ENCODE measurements at regions of chr12 and their contacts with region 1.

Region 1: DNA sequence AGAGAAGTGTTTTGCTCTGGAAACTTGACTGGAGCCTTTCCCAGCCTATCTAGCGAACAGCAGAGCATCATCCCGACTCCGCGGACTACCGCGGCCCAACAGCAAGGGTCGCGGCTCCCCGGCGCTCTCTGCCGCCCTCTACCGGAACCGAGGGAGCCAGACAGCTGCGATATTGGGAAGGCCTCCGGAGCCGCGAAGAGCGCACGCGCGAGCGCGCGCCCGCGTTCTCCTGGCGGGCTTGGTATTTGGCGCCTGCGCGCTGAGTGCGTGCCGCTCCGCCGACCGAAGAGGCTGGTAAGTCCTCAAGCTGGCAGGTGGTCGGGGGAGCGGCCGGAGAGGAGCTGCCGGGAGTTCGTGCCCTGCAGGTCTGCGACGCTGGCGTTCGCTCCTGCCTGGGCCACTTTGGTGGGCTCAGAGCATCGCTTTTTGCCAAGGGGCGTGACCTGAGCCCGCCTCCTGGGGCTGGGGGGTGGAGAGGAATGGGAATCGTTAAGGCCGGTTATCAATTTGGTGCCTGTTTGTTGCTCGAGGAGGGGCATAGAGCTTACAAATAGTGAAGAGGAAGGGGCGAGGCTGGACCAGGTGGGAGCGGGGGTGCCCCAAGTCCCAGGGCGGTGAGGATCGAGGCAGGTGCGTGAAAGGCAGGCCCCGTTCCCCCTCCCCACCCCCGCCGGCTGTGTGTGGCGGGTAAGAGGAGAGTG is at the start of gene TMEM106C:
- DNase-seq: peak; percentile 89 to 93 (median 92)
- H3K4me3 ChIP-seq: peak within 1 kb of the TSS; percentile 84 to 92
- H3K4me3 Mint-ChIP-seq: peak within 1 kb of the TSS; percentile 93 to 99 (median 99)
- H3K27ac ChIP-seq: peak within 1 kb of the TSS; percentile 62
- H3K27ac Mint-ChIP-seq: peak within 1 kb of the TSS; percentile 91 to 97 (median 92)
- H3K4me1 ChIP-seq: peaks cover 19% of the 10 kb centered on the region
- H3K4me1 Mint-ChIP-seq: peaks cover 11 to 39% (median 32%) of the 10 kb centered on the region in 4 donors
- H3K27me3 ChIP-seq: no peaks in the 10 kb centered on the region
- H3K27me3 Mint-ChIP-seq: peaks cover 0 to 5% of the 10 kb centered on the region in 2 donors
- total RNA-seq, gene TMEM106C: 42.5 to 42.7 TPM

Region 2: GRCh38 chr12:47705566-47706425 is 257.7 kb before region 1 on chr12 and contains the start of gene RPAP3:
- CTCF ChIA-PET with region 1: no interaction called
- POLR2A ChIA-PET with region 1: interaction called, 5 read pairs
- intact Hi-C with region 1: loop called (anchors 5 kb)
- DNase-seq: peak; percentile 93 to 96 (median 93)
- H3K4me3 ChIP-seq: peak within 1 kb of the TSS; percentile 60 to 70
- H3K4me3 Mint-ChIP-seq: peak within 1 kb of the TSS; percentile 95 to 100 (median 98)
- H3K27ac ChIP-seq: peak within 1 kb of the TSS; percentile 81
- H3K27ac Mint-ChIP-seq: peak within 1 kb of the TSS; percentile 93 to 99 (median 97)
- H3K4me1 ChIP-seq: peaks cover 54% of the 10 kb centered on the region
- H3K4me1 Mint-ChIP-seq: peaks cover 35 to 56% (median 47%) of the 10 kb centered on the region in 4 donors
- H3K27me3 ChIP-seq: no peaks in the 10 kb centered on the region
- H3K27me3 Mint-ChIP-seq: no peaks in the 10 kb centered on the region
- total RNA-seq, gene RPAP3: 40.8 to 41.8 TPM

Region 3: DNA sequence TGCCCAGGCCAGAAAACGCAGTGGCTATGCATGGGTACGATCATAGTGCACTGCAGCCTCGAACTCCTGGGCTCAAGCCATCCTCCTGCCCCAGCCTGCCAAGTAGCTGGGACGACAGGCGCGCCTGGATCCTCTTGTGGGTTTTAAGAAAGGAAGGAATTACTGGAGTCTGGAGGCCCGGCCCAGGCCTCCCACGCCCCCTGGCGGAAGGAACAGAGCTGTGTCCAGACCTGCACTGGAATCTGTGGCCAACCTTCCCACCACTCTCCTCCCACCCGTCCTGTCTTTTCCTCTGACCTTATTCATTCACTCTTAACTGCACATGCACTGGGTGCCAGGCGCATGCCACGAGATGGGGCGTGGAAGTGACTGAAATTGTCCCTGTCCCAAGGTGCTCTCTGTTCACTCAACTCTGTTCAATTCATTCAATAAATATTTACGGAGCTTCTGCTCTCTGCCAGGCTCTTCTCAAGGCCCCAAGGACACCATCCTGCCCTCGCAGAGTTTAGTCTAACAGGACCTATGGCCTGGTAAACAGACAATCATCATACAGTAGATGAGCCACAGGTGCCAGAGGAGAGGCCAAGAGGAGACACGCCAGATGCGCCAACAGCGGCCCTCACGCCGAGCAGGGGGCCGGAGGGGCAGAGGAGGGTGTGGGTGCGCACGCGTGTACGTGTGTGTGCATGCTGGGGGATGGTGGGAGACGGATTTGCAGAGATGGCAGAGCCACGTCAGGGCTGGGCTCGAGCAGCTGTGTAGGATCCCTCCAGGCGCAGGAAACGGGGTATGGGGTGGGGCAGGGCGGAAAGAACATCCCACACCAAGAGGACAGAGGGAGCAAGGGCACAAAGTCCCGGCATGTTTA is 13.8 kb before region 1 on chr12:
- CTCF ChIA-PET with region 1: interaction called, 14 read pairs
- POLR2A ChIA-PET with region 1: no interaction called
- intact Hi-C with region 1: no loop called
- DNase-seq: peak in 4 of 5 donors; percentile 28 to 38 (median 34)
- H3K4me3 ChIP-seq: no peak overlapping the region
- H3K4me3 Mint-ChIP-seq: no peak overlapping the region
- H3K27ac ChIP-seq: no peak overlapping the region
- H3K27ac Mint-ChIP-seq: no peak overlapping the region
- H3K4me1 ChIP-seq: no peaks in the 10 kb centered on the region
- H3K4me1 Mint-ChIP-seq: no peaks in the 10 kb centered on the region
- H3K27me3 ChIP-seq: no peaks in the 10 kb centered on the region
- H3K27me3 Mint-ChIP-seq: peaks cover 3 to 6% of the 10 kb centered on the region in 2 donors

Region 4: DNA sequence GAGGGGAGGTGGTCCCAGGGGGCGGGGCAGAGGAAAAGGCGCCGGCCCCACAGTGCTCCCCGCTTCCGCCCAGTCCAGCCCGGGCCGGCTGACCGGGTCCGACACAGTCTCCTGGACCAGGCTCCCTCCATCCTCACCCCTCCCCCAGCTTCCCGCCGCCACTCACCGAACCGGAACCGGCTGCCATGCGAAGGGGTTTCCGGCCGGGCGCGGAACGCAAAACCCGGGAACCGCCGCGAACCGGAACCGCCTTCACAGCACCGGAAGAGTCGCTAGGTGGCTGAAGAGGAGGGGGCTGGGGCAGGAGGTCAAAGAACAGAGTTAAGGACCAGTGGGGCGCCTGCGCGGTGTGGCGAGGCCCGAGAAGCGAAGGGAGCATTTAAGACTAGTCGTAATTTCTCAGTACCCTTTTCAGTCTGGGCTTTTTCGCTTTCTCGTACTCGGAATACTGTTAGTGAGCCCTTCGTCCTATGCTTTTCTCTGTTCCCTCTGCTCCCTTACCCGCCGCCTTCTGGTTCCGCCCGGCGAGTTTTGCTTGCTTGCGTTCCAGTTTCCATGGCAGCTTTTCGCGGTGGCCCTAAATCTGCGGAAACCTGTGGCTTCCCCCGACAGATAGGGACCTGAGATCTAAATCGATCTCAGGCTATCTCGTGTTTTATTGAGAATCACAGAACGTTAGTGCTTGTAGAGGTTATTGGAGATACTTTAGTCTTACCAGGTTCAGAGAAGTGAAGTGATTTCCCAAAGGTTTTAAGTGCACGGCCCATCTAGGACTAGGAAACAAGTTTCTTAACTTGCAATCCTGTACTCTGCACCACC is 142.6 kb after region 1 on chr12 and contains the start of gene SENP1:
- CTCF ChIA-PET with region 1: interaction called, 3 read pairs
- POLR2A ChIA-PET with region 1: no interaction called
- intact Hi-C with region 1: loop called (anchors 5 kb)
- DNase-seq: peak; percentile 91 to 93 (median 92)
- H3K4me3 ChIP-seq: peak within 1 kb of the TSS; percentile 84 to 93
- H3K4me3 Mint-ChIP-seq: peak within 1 kb of the TSS; percentile 89 to 97 (median 92)
- H3K27ac ChIP-seq: peak within 1 kb of the TSS; percentile 96
- H3K27ac Mint-ChIP-seq: peak within 1 kb of the TSS; percentile 93 to 100 (median 99)
- H3K4me1 ChIP-seq: peaks cover 42% of the 10 kb centered on the region
- H3K4me1 Mint-ChIP-seq: peaks cover 42 to 65% (median 52%) of the 10 kb centered on the region in 4 donors
- H3K27me3 ChIP-seq: no peaks in the 10 kb centered on the region
- H3K27me3 Mint-ChIP-seq: no peaks in the 10 kb centered on the region
- total RNA-seq, gene SENP1: 28.7 to 35.1 TPM

Region 5: GRCh38 chr12:48165094-48165981 is 201.8 kb after region 1 on chr12:
- CTCF ChIA-PET with region 1: interaction called, 10 read pairs
- POLR2A ChIA-PET with region 1: no interaction called
- intact Hi-C with region 1: loop called (anchors 1 kb)
- DNase-seq: peak; percentile 61 to 73 (median 71)
- H3K4me3 ChIP-seq: no peak overlapping the region
- H3K4me3 Mint-ChIP-seq: no peak overlapping the region
- H3K27ac ChIP-seq: no peak overlapping the region
- H3K27ac Mint-ChIP-seq: no peak overlapping the region
- H3K4me1 ChIP-seq: no peaks in the 10 kb centered on the region
- H3K4me1 Mint-ChIP-seq: peaks cover 0 to 6% (median 1%) of the 10 kb centered on the region in 4 donors
- H3K27me3 ChIP-seq: no peaks in the 10 kb centered on the region
- H3K27me3 Mint-ChIP-seq: peaks cover 6 to 7% of the 10 kb centered on the region in 2 donors

Region 6: GRCh38 chr12:48851883-48852733 is 888.6 kb after region 1 on chr12 and contains the start of gene DDX23:
- CTCF ChIA-PET with region 1: no interaction called
- POLR2A ChIA-PET with region 1: no interaction called
- intact Hi-C with region 1: no loop called
- DNase-seq: peak; percentile 89 to 96 (median 92)
- H3K4me3 ChIP-seq: peak within 1 kb of the TSS; percentile 39 to 95
- H3K4me3 Mint-ChIP-seq: peak within 1 kb of the TSS; percentile 91 to 100 (median 98)
- H3K27ac ChIP-seq: peak within 1 kb of the TSS; percentile 91
- H3K27ac Mint-ChIP-seq: peak within 1 kb of the TSS; percentile 92 to 99 (median 99)
- H3K4me1 ChIP-seq: peaks cover 32% of the 10 kb centered on the region
- H3K4me1 Mint-ChIP-seq: peaks cover 28 to 49% (median 40%) of the 10 kb centered on the region in 4 donors
- H3K27me3 ChIP-seq: no peaks in the 10 kb centered on the region
- H3K27me3 Mint-ChIP-seq: no peaks in the 10 kb centered on the region
- total RNA-seq, gene DDX23: 154 to 158 TPM

Measured in CD4-positive, alpha-beta memory T cell (primary cell).